Endothelial cell of umbilical vein (primary cell): ENCODE measurements at regions of chr5 and their contacts with region 1.

Region 1: GRCh38 chr5:153445851-153446579 is 44.5 kb upstream of the GRIA1 start:
- DNase-seq: no peak
- H3K4me3 ChIP-seq: no peak overlapping the region
- H3K27ac ChIP-seq: no peak overlapping the region
- H3K4me1 ChIP-seq: no peaks in the 10 kb centered on the region
- H3K27me3 ChIP-seq: no peaks in the 10 kb centered on the region
- CTCF ChIP-seq: no peak
- POLR2A ChIP-seq: no peak

Region 2: DNA sequence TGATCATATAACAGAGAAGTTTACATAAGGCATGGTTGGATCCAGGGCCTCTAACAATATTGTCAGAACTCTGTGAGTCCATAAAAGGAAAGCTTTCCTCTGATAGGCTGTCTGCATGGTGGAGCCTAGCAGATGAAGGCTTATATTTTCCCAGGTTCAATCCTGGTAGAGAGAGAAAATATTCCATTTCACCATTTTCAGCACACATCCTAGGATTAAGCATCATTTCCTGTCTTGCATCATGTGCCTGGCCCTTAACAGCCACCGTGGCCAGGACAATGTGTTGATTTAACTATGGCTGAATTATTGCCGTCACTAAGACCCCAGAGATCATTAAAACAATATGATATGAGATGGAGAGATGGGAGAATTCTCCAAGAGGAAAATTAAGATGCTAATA is 46.4 kb before region 1 on chr5:
- CTCF ChIA-PET with region 1: no interaction called
- POLR2A ChIA-PET with region 1: no interaction called
- dilution Hi-C with region 1: no loop called
- intact Hi-C with region 1: loop called (anchors 2 kb)
- DNase-seq: no peak
- H3K4me3 ChIP-seq: no peak overlapping the region
- H3K27ac ChIP-seq: no peak overlapping the region
- H3K4me1 ChIP-seq: no peaks in the 10 kb centered on the region
- H3K27me3 ChIP-seq: no peaks in the 10 kb centered on the region
- CTCF ChIP-seq: no peak
- POLR2A ChIP-seq: no peak